Activated naive CD4-positive, alpha-beta T cell treated with anti-CD3 and anti-CD28 coated beads, Interleukin-2, amount 10 ng/mL, durations not matched to agents 7 days and 5 days (primary cell): ENCODE measurements at regions of chr12 and their contacts with region 1.

Region 1: GRCh38 chr12:98998697-98999299 is 353.7 kb downstream of the APAF1 start:
- DNase-seq: no peak
- H3K4me3 Mint-ChIP-seq: no peak overlapping the region
- H3K27ac Mint-ChIP-seq: no peak overlapping the region
- H3K4me1 Mint-ChIP-seq: no peaks in the 10 kb centered on the region
- H3K27me3 Mint-ChIP-seq: no peaks in the 10 kb centered on the region

Region 2: DNA sequence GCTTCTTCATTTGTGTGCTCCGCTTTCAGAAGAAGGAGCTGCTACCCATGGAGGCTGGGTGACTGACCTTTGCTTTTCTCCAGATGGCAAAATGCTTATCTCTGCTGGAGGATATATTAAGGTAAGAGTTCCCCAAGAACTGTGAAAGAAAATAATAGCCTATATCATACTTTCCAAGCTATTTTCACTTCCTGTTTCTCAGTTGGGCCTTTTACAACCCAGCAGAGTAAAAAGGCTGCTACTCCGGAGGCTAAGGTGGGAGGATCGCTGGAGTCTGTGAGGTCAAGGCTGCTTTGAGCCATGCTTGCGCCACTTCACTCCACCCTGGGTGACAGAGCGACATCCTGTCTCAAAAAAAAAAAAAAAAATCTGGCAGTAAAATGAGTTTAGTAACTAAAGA is 271.6 kb before region 1 on chr12:
- CTCF ChIA-PET with region 1: interaction called, 12 read pairs
- DNase-seq: no peak
- H3K4me3 Mint-ChIP-seq: no peak overlapping the region
- H3K27ac Mint-ChIP-seq: no peak overlapping the region
- H3K4me1 Mint-ChIP-seq: no peaks in the 10 kb centered on the region
- H3K27me3 Mint-ChIP-seq: no peaks in the 10 kb centered on the region

Region 3: DNA sequence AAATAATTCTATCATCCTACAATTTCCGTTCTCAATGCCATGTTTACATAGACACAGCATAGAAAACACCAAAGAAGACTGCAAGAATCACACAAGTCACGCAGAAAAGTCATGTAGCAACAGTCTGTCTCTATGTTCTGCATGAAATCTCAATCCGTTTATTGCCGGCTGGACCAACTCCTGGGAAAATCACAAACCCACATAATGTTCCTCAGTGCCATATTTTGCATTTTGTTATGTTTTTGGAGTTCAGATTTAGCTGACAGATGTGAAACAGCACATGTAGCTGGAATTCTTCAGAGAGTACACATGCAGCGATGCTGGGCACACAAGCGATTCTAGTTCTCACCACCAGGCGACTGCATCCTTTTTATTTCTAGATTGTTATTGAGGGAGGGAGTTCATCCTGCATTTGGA is 160.6 kb before region 1 on chr12:
- CTCF ChIA-PET with region 1: no interaction called
- DNase-seq: no peak
- H3K4me3 Mint-ChIP-seq: no peak overlapping the region
- H3K27ac Mint-ChIP-seq: no peak overlapping the region
- H3K4me1 Mint-ChIP-seq: no peaks in the 10 kb centered on the region
- H3K27me3 Mint-ChIP-seq: no peaks in the 10 kb centered on the region

Region 4: DNA sequence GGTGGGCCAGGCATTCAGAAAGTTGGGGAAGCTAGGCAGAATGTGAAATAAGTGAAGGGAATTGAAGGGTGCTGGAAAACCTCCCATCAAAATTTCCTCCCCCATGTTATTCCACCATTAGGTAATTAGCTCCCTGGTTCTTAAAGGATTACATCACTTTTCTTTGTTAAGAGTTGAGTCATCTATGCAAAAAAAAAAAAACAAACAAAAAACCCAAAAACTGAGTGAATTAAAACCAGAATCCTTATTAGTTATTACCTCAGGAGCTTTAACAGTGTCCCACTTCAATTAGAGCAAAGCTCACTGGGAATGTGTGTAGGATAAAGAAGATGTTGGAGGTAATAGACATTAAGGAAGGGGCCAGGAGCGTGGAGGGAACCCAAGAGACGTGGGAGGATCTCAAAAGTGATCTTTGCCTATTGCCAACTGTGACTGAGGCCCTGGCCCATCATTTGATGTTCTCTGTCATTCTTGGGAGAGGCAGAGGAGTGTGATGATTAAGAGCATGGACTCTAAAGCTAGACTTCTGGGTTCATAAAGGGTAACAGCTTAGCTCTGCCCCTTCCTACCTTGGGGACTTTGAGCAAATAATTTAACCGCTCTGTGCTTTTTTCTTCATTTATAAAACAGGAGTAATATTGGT is 11.0 kb after region 1 on chr12:
- CTCF ChIA-PET with region 1: interaction called, 11 read pairs
- DNase-seq: no peak
- H3K4me3 Mint-ChIP-seq: no peak overlapping the region
- H3K27ac Mint-ChIP-seq: no peak overlapping the region
- H3K4me1 Mint-ChIP-seq: no peaks in the 10 kb centered on the region
- H3K27me3 Mint-ChIP-seq: no peaks in the 10 kb centered on the region